Sigmoid colon (tissue), 7 donors: ENCODE measurements at regions of chr15 and their contacts with region 1.

Region 1: DNA sequence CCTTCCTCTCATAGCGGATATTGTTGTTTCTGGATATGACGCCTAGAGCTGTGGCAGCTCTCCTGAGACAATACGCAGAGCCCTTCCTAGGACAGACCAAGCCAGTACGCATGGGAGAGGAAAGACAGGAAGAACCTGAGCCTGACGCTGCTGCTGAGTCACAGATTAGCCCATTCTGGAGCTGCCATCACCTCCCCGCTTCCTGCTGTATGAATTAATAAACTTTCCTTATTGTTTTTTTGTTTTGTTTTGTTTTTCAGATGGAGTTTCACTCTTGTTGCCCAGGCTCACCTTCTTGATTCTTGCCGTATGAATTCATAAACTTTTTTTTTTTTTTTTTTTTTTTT is 67.0 kb downstream of the PPCDC start:
- DNase-seq: peak; percentile 79
- H3K4me3 ChIP-seq: no peak overlapping the region
- H3K27ac ChIP-seq: peak overlapping the region in 3 of 4 donors; percentile 14 to 79 (median 62)
- H3K4me1 ChIP-seq: peaks cover 0 to 11% (median 2%) of the 10 kb centered on the region in 4 donors
- H3K27me3 ChIP-seq: no peaks in the 10 kb centered on the region
- CTCF ChIP-seq: no peak
- EP300 ChIP-seq: peak in 2 of 4 donors; percentile 75 to 90
- POLR2A ChIP-seq: no peak

Region 2: DNA sequence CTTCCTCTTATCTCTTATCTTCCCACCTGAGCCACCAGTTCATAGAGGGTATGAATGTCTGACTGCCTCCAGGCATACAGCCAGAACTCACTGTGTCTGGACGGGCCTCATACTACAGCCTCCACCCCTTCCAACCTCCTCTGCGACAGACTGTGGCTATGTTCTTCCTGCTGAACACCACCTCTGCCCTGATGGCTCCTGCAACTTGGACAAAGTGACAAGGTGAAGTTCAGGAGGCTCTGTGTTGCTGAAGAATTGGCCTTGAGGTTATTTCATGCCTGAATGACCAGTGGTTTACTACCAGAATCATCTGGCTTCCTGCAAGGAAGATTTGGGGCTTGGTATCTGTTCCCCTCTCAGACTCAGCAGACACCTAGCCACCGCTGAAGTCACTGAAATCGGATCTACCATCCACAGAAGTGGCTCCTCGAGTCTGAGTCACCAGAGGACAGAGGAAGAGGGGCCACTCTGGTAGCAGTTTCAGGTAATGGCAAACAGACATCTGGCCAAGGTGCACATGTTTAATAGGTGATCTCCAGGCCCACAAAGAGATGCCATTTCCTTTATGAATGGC is 233.2 kb before region 1 on chr15:
- intact Hi-C with region 1: no loop called
- DNase-seq: no peak
- H3K4me3 ChIP-seq: no peak overlapping the region
- H3K27ac ChIP-seq: no peak overlapping the region
- H3K4me1 ChIP-seq: peaks cover 0 to 26% (median 12%) of the 10 kb centered on the region in 4 donors
- H3K27me3 ChIP-seq: no peaks in the 10 kb centered on the region
- CTCF ChIP-seq: no peak
- EP300 ChIP-seq: no peak
- POLR2A ChIP-seq: no peak

Region 3: DNA sequence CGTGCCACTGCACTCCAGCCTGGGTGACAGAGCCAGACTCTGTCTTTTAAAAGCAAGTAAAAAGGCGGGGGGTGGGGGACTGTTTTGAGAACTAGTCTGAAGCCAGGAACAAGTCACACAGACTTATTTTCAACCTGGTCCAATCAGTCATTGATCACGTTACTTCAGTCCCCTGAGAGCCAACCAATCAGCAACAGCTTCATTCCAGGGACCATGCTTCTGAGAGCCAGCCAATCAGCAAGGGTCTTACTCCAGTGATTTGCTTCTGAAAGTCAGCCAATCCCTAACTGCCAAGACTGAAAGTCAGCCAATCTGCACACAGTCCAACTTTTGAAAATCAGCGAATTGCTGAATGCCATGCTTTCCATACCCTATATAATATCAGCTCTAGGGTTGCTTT is 62.7 kb after region 1 on chr15:
- intact Hi-C with region 1: no loop called
- DNase-seq: no peak
- H3K4me3 ChIP-seq: no peak overlapping the region
- H3K27ac ChIP-seq: no peak overlapping the region
- H3K4me1 ChIP-seq: no peaks in the 10 kb centered on the region
- H3K27me3 ChIP-seq: no peaks in the 10 kb centered on the region
- CTCF ChIP-seq: no peak
- EP300 ChIP-seq: no peak
- POLR2A ChIP-seq: no peak

Region 4: GRCh38 chr15:75178171-75179075 is 88.1 kb after region 1 on chr15:
- intact Hi-C with region 1: loop called (anchors 5 kb)
- DNase-seq: peak; percentile 83
- H3K4me3 ChIP-seq: peak overlapping the region in 3 of 4 donors; percentile 33 to 46 (median 43)
- H3K27ac ChIP-seq: peak overlapping the region; percentile 55 to 83 (median 76)
- H3K4me1 ChIP-seq: peaks cover 0 to 78% (median 73%) of the 10 kb centered on the region in 4 donors
- H3K27me3 ChIP-seq: no peaks in the 10 kb centered on the region
- CTCF ChIP-seq: no peak
- EP300 ChIP-seq: no peak
- POLR2A ChIP-seq: peak in 1 of 2 donors; percentile 12